ENCODE measurements at regions of chr1 and their contacts with region 1.

Region 1: DNA sequence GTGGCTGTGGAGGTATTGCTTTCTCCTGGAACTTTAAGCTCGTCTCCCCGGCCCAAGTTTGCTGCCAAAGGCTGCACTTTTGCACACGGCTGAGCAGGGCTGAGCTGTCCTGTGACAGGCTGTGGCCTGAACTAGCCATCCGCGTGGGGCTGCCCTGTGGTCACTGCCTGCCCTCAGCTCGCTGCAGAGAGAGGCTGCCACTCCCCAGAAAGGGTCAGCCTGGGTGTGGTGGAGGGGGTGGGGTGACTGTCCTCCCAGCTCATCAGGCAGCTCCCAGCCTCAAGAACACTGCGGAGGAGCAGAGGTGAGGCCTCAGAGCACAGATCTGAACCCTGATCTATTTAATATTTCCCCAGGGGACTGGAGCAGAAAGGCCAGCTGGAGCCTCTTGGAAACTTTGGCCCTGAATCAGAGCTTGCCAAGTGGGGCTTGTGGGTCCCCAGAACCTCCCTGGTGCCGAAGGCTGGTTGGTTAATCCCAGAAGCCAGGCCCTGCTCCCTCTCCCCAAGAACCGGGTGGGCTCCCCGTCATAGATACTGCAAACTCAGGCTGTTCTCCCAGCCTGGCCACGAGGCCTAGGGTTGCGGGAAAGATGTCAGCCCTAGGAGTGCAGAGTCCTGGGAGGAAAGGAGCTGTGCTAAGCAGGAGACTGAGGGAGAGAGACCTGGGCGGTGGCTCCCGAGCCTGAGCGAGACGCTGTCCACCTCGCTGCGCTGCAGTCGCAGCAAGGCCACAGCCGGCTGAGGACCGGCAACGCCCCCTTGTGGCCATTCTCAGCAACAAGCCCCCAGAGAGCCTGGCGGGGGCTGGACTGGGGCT is 125.1 kb upstream of the IPO9 start:
- DNase-seq: peak; percentile 65
- H3K4me3 ChIP-seq: no peak overlapping the region
- H3K27ac ChIP-seq: no peak overlapping the region
- H3K4me1 ChIP-seq: no peaks in the 10 kb centered on the region
- H3K27me3 ChIP-seq: no peaks in the 10 kb centered on the region
- CTCF ChIP-seq: peak; percentile 93 to 97 (median 97)
- POLR2A ChIP-seq: no peak

Region 2: DNA sequence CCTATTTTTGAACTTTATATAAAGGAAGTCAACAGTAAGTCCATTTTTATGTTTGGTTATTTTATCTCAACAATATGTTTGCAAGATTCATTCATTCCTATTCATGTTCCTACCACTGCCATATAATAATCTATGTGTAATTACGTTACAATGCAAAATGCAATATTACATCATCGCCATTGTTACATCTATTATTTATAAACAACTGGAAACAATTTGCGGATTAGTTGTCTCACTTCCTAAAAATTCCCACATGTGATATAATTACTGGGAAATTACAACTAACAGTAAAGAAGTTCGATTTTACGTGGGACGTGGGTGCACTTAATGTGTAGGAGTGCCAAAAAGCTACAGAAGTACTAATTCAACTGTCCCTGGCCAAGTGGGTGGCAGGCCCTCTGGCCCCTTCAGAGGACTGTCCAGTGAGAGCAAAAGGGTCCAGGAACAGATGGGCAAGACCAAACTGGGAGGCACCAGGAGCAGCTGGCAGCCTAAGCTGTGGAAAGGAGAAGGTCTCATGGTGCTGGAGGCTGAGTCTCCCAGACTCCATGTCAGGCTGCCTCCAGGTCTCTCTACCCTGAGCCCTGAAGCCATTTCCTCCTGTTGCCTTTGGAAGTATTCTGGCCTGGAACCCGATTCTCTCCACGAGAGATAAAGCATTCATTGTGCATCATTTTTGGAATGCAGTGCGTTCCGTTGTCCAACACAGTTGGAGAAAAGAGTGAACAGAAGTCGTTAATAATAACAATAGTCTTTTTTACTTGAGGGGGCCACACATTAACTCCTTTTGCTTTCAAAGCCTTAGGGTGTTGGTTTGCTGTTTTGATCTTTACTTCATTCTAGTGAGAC is 369.3 kb before region 1 on chr1:
- intact Hi-C with region 1: no loop called
- DNase-seq: no peak
- H3K4me3 ChIP-seq: no peak overlapping the region
- H3K27ac ChIP-seq: no peak overlapping the region
- H3K4me1 ChIP-seq: no peaks in the 10 kb centered on the region
- H3K27me3 ChIP-seq: no peaks in the 10 kb centered on the region
- CTCF ChIP-seq: no peak
- POLR2A ChIP-seq: no peak

Region 3: DNA sequence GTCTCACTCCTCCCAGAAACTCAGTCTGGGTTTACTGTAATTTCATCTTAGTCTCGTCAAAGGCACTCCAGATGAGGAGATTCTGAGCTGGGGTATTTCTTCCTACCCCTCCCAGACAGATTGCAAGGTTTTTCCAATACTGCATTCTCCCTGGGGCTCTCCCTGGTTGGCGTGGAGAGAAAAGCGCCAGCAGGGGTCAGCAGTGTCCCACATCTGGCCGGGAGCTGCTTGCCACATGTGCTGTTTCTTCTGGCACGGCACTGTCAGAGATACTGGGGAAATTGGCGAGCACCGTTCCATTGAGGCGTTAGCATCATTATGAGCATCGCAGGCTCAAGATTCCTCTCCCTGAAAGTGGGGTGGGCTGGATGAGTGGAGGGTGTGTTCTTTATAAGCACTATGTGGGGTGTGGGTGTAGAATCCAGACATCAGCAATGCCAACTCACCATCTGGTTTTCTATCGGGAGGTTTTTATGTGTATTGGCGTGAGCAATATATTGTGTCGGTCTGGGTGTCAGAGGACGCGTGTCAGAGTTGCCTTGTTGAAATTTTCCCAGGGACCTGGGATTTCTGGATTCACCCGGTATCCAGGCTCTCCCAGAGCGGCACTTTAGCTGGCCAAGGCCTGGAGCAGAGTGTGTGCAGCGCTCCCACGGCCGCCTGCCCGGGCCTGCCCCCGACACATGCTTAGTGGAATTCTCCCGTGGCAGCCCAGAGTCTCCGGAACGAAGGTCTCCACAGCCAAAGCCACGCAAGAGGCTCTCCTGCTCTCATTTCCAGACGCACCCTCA is 172.9 kb before region 1 on chr1:
- intact Hi-C with region 1: loop called (anchors 1 kb)
- DNase-seq: peak; percentile 57
- H3K4me3 ChIP-seq: no peak overlapping the region
- H3K27ac ChIP-seq: no peak overlapping the region
- H3K4me1 ChIP-seq: no peaks in the 10 kb centered on the region
- H3K27me3 ChIP-seq: no peaks in the 10 kb centered on the region
- CTCF ChIP-seq: peak in 3 of 4 experiments; percentile 43 to 73 (median 66)
- POLR2A ChIP-seq: no peak

Region 4: GRCh38 chr1:201559679-201560162 is 144.1 kb before region 1 on chr1:
- intact Hi-C with region 1: loop called (anchors 1 kb)
- DNase-seq: peak; percentile 73
- H3K4me3 ChIP-seq: no peak overlapping the region
- H3K27ac ChIP-seq: no peak overlapping the region
- H3K4me1 ChIP-seq: no peaks in the 10 kb centered on the region
- H3K27me3 ChIP-seq: no peaks in the 10 kb centered on the region
- CTCF ChIP-seq: peak; percentile 86 to 98 (median 96)
- POLR2A ChIP-seq: no peak

Region 5: DNA sequence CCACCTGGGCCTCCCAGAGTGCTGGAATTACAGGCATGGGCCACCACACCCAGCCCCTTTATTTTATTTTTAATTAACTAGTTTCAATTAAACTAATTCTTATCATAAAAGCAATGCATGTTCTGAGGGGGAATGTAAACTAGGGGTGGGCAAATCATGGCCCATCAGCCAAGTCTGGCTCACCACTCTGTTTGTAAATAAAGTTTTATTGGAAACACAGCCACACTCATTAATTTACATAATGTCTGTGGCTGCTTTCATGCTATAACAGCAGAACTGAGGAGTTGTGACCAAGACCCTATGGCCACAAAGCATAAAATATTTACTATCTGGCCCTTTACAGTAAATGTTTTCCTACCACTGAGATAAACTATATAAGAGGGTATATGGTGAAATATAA is 96.4 kb after region 1 on chr1:
- intact Hi-C with region 1: no loop called
- DNase-seq: no peak
- H3K4me3 ChIP-seq: no peak overlapping the region
- H3K27ac ChIP-seq: no peak overlapping the region
- H3K4me1 ChIP-seq: no peaks in the 10 kb centered on the region
- H3K27me3 ChIP-seq: no peaks in the 10 kb centered on the region
- CTCF ChIP-seq: no peak
- POLR2A ChIP-seq: no peak

Measured in prostate gland (tissue), 2 donors.